ENCODE measurements at regions of chr6 and their contacts with region 1.

Region 1: DNA sequence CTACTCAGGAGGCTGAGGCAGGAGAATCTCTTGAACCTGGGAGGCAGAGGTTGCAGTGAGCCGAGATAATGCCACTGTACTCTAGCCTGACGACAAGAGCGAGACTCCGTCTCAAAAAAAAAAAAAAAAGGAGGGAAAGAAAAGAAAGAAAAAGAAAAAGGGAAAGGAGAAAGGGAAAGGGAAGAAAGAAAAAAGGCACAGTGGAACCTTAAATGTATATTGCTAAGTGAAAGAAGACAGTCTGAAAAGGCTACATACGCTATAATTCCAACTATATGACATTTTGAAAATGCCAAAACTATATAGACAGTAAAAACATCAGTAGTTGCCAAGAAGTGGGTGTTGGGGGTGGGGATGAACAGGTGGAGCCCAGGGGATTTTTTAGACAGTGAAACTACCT is 16.2 kb downstream of the PPIL4 start:
- DNase-seq: no peak
- H3K4me3 Mint-ChIP-seq: no peak overlapping the region
- H3K27ac Mint-ChIP-seq: no peak overlapping the region
- H3K4me1 Mint-ChIP-seq: peaks cover 4% of the 10 kb centered on the region
- H3K27me3 Mint-ChIP-seq: no peaks in the 10 kb centered on the region

Region 2: DNA sequence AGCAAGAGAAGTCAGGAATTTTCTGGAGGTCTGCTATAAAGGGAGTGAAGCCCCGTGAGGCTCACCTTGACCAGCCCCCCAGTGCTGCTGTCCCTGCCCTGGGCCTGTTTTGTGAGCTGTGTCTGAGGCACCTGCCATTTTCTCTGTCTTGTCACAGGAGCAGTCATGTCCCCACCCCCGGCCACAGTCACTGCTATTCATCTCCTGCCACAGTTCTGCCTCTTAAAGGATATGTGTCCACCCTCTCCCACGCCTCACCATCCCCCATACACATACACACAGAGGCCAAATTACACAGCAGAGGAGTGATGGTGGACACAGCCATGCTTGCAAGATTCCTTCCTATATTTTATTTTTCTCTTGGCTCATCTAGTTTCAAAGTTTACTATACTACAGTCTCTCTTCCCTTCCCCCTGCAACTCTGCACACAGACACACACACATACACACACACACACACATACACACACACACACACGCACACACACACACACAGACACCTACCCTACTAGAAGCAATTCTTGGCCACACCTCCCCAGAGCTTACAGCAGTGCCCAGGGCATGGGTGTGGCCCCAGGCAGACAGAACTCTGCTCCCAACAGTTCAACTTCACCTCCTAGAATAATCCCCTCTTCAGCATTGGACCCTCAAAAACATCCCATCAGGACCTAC is 280.8 kb before region 1 on chr6:
- CTCF ChIA-PET with region 1: no interaction called
- POLR2A ChIA-PET with region 1: no interaction called
- DNase-seq: peak; percentile 46
- H3K4me3 Mint-ChIP-seq: peak overlapping the region; percentile 9
- H3K27ac Mint-ChIP-seq: no peak overlapping the region
- H3K4me1 Mint-ChIP-seq: peaks cover 33% of the 10 kb centered on the region
- H3K27me3 Mint-ChIP-seq: no peaks in the 10 kb centered on the region

Region 3: DNA sequence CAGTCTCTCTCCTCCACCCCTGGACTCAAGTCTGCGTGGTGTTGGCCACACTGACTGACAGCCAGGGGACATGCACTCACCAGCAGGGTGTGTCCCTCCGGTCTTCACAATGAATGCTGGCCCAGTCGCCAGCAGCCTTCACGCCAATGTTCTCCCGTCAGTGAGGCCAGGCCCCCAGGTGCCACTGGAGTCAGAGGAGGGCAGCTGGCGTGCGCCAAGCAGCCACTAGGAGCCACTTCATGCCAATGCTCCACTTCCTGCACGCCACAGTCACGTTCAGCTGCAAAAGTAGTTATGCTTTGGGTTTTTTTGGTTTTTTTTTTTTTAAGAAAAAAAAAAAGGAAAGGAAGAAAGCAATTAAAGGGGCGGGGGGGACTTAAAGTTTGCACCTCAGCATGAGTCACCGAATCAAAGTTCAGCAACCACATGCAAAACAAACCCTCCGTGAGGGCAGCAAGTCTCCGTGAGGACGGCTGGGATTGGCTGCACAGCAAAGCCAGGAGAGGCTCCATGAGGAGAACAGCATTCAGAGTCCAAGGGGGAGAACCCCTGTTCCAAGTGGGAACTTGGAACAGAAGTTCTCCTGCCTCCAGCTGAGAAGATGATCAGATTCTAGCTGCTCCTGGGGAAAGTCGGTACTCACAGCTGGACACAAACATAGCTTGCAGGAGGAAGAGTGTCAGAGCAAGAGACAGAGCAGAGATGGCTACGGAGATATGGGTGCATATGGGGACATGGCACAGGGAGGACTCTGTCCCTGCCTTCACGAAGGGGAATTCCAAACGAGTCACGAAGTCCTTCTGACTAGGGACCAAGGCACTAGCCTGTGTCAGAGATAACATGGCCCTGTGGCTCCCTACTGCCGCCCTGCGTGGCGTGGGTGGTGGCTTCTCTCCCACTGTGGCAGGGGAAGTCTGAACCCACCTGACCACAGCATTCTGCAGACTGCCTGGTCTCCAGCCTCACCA is 44.6 kb before region 1 on chr6 and contains the start of gene ZC3H12D:
- CTCF ChIA-PET with region 1: interaction called, 10 read pairs
- POLR2A ChIA-PET with region 1: no interaction called
- DNase-seq: peak; percentile 86
- H3K4me3 Mint-ChIP-seq: peak within 1 kb of the TSS; percentile 98
- H3K27ac Mint-ChIP-seq: peak within 1 kb of the TSS; percentile 96
- H3K4me1 Mint-ChIP-seq: peaks cover 41% of the 10 kb centered on the region
- H3K27me3 Mint-ChIP-seq: no peaks in the 10 kb centered on the region
- total RNA-seq, gene ZC3H12D: 37.4 to 37.6 TPM